Activated T-helper 1 cell treated with anti-CD3 and anti-CD28 coated beads, Interleukin-12 subunit alpha, Interleukin-12 subunit beta, Interleukin-2, Interleukin-4 antibody, amounts not matched to agents 30 ng/mL and 10 ng/mL and 1 ng/mL, durations not matched to agents 14 hours and 24 hours and 36 hours (primary cell): ENCODE measurements at regions of chr10 and their contacts with region 1.

Region 1: GRCh38 chr10:15106352-15107013 is 9.3 kb downstream of the RPP38 start:
- DNase-seq: peak; percentile 47
- H3K4me3 Mint-ChIP-seq: no peak overlapping the region
- H3K27ac Mint-ChIP-seq: no peak overlapping the region
- H3K4me1 Mint-ChIP-seq: peaks cover 7% of the 10 kb centered on the region
- H3K27me3 Mint-ChIP-seq: no peaks in the 10 kb centered on the region

Region 2: DNA sequence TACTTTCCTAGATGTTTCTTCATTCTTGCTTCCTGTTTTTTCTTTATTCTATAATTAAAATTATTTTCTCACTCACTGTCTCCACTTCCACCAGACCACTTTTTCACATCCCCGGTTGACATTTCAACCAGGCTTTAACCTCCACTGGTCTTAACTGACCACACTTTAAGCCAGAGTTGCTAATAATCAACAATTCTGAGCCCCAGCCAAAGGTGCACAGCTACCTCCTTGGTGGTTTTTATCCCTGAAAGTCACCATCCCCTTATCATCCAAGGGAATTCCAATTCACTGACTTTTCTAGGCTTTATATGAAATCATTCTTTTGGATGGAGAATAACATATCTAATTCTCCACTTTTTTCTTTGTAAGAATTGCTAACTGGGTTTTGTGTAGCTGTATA is 914.6 kb before region 1 on chr10:
- intact Hi-C with region 1: loop called (anchors 2 kb)
- DNase-seq: no peak
- H3K4me3 Mint-ChIP-seq: no peak overlapping the region
- H3K27ac Mint-ChIP-seq: no peak overlapping the region
- H3K4me1 Mint-ChIP-seq: no peaks in the 10 kb centered on the region
- H3K27me3 Mint-ChIP-seq: peaks cover 29% of the 10 kb centered on the region

Region 3: DNA sequence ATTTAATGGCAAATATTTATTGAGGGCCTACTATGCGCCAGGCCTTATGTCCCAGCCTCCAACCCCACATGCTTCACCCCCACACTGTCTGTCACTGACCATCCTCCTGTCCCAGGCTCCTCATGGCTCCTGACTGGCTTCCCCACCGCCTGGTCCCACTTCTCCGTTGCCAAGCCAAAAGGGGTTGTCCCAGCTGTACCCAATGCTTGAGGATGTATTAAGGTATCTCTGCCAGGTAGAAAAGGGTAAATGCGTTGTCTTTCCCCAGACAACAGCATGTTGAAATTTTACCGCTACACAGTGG is 606.9 kb before region 1 on chr10:
- intact Hi-C with region 1: loop called (anchors 1 kb)
- DNase-seq: no peak
- H3K4me3 Mint-ChIP-seq: no peak overlapping the region
- H3K27ac Mint-ChIP-seq: no peak overlapping the region
- H3K4me1 Mint-ChIP-seq: peaks cover 14% of the 10 kb centered on the region
- H3K27me3 Mint-ChIP-seq: peaks cover 4% of the 10 kb centered on the region

Region 4: GRCh38 chr10:14954001-14954770 is 152.3 kb before region 1 on chr10 and contains the start of gene DCLRE1C:
- intact Hi-C with region 1: loop called (anchors 1 kb)
- DNase-seq: peak; percentile 89
- H3K4me3 Mint-ChIP-seq: peak within 1 kb of the TSS; percentile 94
- H3K27ac Mint-ChIP-seq: peak within 1 kb of the TSS; percentile 95
- H3K4me1 Mint-ChIP-seq: peaks cover 57% of the 10 kb centered on the region
- H3K27me3 Mint-ChIP-seq: no peaks in the 10 kb centered on the region
- total RNA-seq, gene DCLRE1C: 15.5 and 20.9 TPM in 2 replicates

Region 5: GRCh38 chr10:14995964-14996565 is 110.4 kb before region 1 on chr10:
- intact Hi-C with region 1: loop called (anchors 1 kb)
- DNase-seq: no peak
- H3K4me3 Mint-ChIP-seq: no peak overlapping the region
- H3K27ac Mint-ChIP-seq: no peak overlapping the region
- H3K4me1 Mint-ChIP-seq: peaks cover 9% of the 10 kb centered on the region
- H3K27me3 Mint-ChIP-seq: peaks cover 5% of the 10 kb centered on the region

Region 6: GRCh38 chr10:15370856-15371701 is 264.6 kb after region 1 on chr10 and contains the start of gene FAM171A1:
- intact Hi-C with region 1: loop called (anchors 5 kb)
- DNase-seq: peak; percentile 48
- H3K4me3 Mint-ChIP-seq: peak within 1 kb of the TSS; percentile 82
- H3K27ac Mint-ChIP-seq: peak within 1 kb of the TSS; percentile 9
- H3K4me1 Mint-ChIP-seq: no peaks in the 10 kb centered on the region
- H3K27me3 Mint-ChIP-seq: peaks cover 76% of the 10 kb centered on the region
- total RNA-seq, gene FAM171A1: 0.96 and 1.5 TPM in 2 replicates